ENCODE measurements at regions of chr2 and their contacts with region 1.

Region 1: DNA sequence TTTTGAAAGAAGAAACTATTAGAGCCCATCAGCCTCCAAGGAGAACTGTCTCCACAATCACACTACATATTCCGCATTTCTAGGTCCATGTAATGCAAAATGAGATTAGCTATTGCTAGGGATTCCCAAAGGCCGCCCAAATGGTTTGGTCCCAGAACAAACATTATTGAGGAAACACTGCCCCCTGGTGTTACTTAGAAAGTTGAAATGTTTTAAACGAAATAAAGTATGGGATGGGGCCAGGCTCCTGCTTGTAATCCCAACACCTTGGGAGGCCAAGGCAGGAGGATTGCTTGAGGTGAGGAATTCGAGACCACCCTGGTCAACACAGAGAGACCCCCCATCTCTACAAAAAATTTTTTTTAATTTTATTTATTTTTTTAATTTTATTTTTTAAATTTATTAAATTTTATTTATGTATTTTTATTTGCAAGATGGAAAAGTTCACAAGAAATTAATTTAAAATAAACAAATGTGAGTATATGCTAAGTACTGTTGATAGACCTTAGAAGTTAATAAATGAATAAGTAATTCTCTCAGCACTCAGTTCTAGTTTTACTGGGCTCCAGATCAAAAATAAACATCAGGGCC is 5.5 kb downstream of the NHEJ1 start:
- DNase-seq: peak; percentile 64 to 77
- ATAC-seq: peak; percentile 74 to 76
- H3K4me3 ChIP-seq: no peak overlapping the region
- H3K27ac ChIP-seq: no peak overlapping the region
- H3K4me1 ChIP-seq: peaks cover 4% of the 10 kb centered on the region; the same call in 1 of the 3 replicates
- CTCF ChIP-seq: peak; percentile 80
- EP300 ChIP-seq: no peak
- POLR2A ChIP-seq: no peak
- RAD21 ChIP-seq: peak; percentile 84 to 90

Region 2: GRCh38 chr2:218995972-218996711 is 159.0 kb before region 1 on chr2:
- CTCF ChIA-PET with region 1: interaction called, 27 read pairs
- POLR2A ChIA-PET with region 1: no interaction called
- DNase-seq: peak; percentile 87
- ATAC-seq: peak; percentile 78 to 93
- H3K4me3 ChIP-seq: peak overlapping the region; percentile 49
- H3K27ac ChIP-seq: peak overlapping the region; percentile 79 to 84
- H3K4me1 ChIP-seq: peaks cover 10% of the 10 kb centered on the region
- CTCF ChIP-seq: peak; percentile 87
- EP300 ChIP-seq: no peak
- POLR2A ChIP-seq: peak; percentile 84
- RAD21 ChIP-seq: peak; percentile 74 to 80

Region 3: DNA sequence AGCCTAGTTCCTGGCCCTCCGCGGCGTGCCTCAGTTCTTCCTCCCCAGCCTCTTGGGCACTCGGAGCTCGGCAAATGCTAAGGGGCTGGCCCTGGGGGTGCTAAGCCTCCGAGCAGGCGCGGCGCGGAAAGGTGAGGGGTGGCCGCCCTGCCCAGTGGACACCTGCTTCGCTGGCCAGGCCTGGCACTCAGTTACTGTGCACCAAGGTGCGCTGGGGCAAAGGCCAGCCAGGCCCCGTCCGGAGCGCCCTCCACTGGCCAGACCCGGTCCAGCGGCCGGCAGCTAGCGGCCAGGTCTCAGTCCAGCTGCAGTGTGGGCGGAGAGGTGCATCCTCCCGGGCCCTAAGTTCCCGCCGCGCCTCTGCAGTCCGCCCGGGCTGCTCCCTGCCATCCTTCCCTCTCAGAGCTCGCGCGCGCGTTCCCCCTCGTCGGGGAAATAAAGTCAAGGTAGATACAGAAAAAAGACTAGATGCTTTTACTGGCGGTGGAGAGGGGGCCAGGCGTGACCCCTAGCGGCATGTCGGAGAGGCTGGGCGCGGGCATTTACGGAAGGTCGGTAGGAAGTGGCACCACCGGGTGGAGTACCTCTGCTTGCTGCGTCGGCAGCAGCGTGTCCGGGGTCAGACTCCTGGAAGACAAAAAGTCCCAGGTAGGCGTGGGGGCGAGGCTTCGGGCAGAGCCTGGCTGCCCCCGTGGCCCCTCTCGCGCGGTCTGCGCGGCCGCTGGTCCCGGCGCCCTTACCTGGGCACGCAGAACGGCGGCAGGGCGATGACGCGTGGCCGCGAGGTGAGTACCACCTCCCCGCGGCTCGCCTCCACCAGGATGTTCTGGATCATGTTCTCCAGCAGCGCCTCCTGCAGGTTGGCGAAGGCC is 152.5 kb before region 1 on chr2:
- CTCF ChIA-PET with region 1: interaction called, 14 read pairs
- POLR2A ChIA-PET with region 1: no interaction called
- DNase-seq: peak; percentile 82 to 93
- ATAC-seq: peak; percentile 84 to 93
- H3K4me3 ChIP-seq: peak overlapping the region; percentile 59
- H3K27ac ChIP-seq: peak overlapping the region; percentile 64 to 83
- H3K4me1 ChIP-seq: peaks cover 7% of the 10 kb centered on the region
- CTCF ChIP-seq: peak; percentile 68
- EP300 ChIP-seq: no peak
- POLR2A ChIP-seq: peak; percentile 52
- RAD21 ChIP-seq: 0 out of 5 replicates have a peak, but pooled peaks have one; percentile 17 to 19

Region 4: GRCh38 chr2:219041252-219041651 is 113.9 kb before region 1 on chr2 and contains the start of gene CFAP65:
- CTCF ChIA-PET with region 1: interaction called, 11 read pairs
- POLR2A ChIA-PET with region 1: no interaction called
- DNase-seq: peak; percentile 53 to 68
- ATAC-seq: peak; percentile 75 to 85
- H3K4me3 ChIP-seq: peak within 1 kb of the TSS; percentile 49
- H3K27ac ChIP-seq: no peak within 1 kb of the TSS
- H3K4me1 ChIP-seq: peaks cover 3% of the 10 kb centered on the region; the same call in 1 of the 3 replicates
- CTCF ChIP-seq: no peak
- EP300 ChIP-seq: no peak
- POLR2A ChIP-seq: no peak
- RAD21 ChIP-seq: no peak
- polyA plus RNA-seq, gene CFAP65: 0.09 and 0.12 TPM in 2 replicates

Region 5: DNA sequence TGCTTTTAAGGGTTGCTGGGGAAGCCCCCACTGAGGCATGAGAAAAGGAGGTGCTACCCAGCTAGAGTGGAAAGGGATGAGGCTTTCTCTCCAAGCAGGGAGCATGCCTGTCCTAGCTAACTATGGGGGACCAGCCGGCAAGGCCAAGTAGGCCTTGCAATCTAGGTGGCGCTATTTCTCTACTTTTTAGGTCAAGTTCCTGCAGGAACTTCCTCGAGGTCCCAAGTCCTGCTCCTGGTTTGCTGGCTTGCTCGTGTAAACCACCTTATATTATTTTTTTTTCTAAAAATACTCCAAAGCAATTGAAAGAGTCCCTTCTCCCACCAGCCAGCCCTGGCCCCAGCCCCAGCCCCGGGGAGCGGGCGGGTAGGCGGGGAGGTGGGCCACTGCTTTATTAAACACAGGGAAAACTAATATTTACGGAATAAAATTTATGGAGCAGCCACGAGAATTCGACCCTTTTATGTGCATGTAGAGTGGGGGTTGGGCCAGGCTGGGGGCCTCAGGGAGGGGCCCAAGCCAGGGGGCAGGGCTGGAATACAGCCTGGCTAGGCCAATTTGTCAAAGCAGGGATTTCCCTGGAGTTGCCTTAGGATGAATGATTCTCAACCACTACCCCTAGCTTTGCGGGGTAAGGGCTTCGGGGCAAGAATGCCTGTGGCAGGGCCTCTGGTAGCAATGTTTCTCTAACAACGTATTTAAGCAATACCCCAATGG is 81.6 kb before region 1 on chr2:
- CTCF ChIA-PET with region 1: interaction called, 15 read pairs
- POLR2A ChIA-PET with region 1: no interaction called
- DNase-seq: peak; percentile 26 to 73
- ATAC-seq: peak; percentile 68 to 92; a peak in 4 of 6 replicates
- H3K4me3 ChIP-seq: no peak overlapping the region
- H3K27ac ChIP-seq: no peak overlapping the region
- H3K4me1 ChIP-seq: no peaks in the 10 kb centered on the region
- CTCF ChIP-seq: peak; percentile 65
- EP300 ChIP-seq: no peak
- POLR2A ChIP-seq: no peak
- RAD21 ChIP-seq: peak; percentile 59 to 63

Measured in A549 (cell line).